Prostate gland (tissue), 2 donors: ENCODE measurements at regions of chr10 and their contacts with region 1.

Region 1: GRCh38 chr10:56383806-56384205 is 22.7 kb upstream of the ZWINT start:
- DNase-seq: no peak
- H3K4me3 ChIP-seq: no peak overlapping the region
- H3K27ac ChIP-seq: peak overlapping the region; percentile 37 to 60
- H3K4me1 ChIP-seq: no peaks in the 10 kb centered on the region
- H3K27me3 ChIP-seq: no peaks in the 10 kb centered on the region
- CTCF ChIP-seq: no peak
- POLR2A ChIP-seq: no peak

Region 2: GRCh38 chr10:55881588-55881987 is 502.2 kb before region 1 on chr10:
- intact Hi-C with region 1: no loop called
- DNase-seq: no peak
- H3K4me3 ChIP-seq: no peak overlapping the region
- H3K27ac ChIP-seq: no peak overlapping the region
- H3K4me1 ChIP-seq: no peaks in the 10 kb centered on the region
- H3K27me3 ChIP-seq: no peaks in the 10 kb centered on the region
- CTCF ChIP-seq: no peak
- POLR2A ChIP-seq: no peak

Region 3: DNA sequence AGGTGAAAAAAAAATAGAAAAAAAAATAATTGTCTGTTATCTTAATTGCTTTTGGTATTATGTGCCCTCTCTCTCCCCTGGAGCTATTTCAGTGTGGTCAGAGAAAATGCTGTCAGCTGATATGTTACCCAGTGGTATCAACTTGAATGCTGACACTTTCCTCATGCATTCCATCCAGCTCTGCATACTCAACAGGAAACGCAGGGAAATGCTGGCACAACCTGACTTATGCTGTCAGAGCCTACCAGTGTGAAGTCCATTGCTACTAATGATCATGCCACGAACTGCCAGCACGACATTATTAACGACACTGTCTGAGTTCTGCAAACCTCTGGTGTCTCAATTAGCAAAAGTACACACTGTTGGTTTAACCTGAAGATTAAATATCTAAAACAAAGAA is 205.6 kb before region 1 on chr10:
- intact Hi-C with region 1: no loop called
- DNase-seq: no peak
- H3K4me3 ChIP-seq: no peak overlapping the region
- H3K27ac ChIP-seq: no peak overlapping the region
- H3K4me1 ChIP-seq: no peaks in the 10 kb centered on the region
- H3K27me3 ChIP-seq: no peaks in the 10 kb centered on the region
- CTCF ChIP-seq: no peak
- POLR2A ChIP-seq: no peak

Region 4: GRCh38 chr10:56329961-56330360 is 53.8 kb before region 1 on chr10:
- intact Hi-C with region 1: loop called (anchors 10 kb)
- DNase-seq: no peak
- H3K4me3 ChIP-seq: no peak overlapping the region
- H3K27ac ChIP-seq: no peak overlapping the region
- H3K4me1 ChIP-seq: no peaks in the 10 kb centered on the region
- H3K27me3 ChIP-seq: no peaks in the 10 kb centered on the region
- CTCF ChIP-seq: no peak
- POLR2A ChIP-seq: no peak

Region 5: GRCh38 chr10:56469482-56469881 is 85.7 kb after region 1 on chr10:
- intact Hi-C with region 1: no loop called
- DNase-seq: no peak
- H3K4me3 ChIP-seq: no peak overlapping the region
- H3K27ac ChIP-seq: no peak overlapping the region
- H3K4me1 ChIP-seq: no peaks in the 10 kb centered on the region
- H3K27me3 ChIP-seq: no peaks in the 10 kb centered on the region
- CTCF ChIP-seq: no peak
- POLR2A ChIP-seq: no peak